ENCODE measurements at regions of chr2 and their contacts with region 1.

Region 1: GRCh38 chr2:218852911-218853667 is 6.5 kb upstream of the WNT6 start:
- DNase-seq: peak; percentile 51 to 85 (median 63)
- ATAC-seq: peak; percentile 92
- H3K4me3 ChIP-seq: no peak overlapping the region
- H3K4me3 Mint-ChIP-seq: no peak overlapping the region
- H3K27ac ChIP-seq: no peak overlapping the region
- H3K27ac Mint-ChIP-seq: no peak overlapping the region
- H3K4me1 ChIP-seq: peaks cover 7% of the 10 kb centered on the region
- H3K4me1 Mint-ChIP-seq: no peaks in the 10 kb centered on the region
- H3K27me3 ChIP-seq: peaks cover 45 to 64% of the 10 kb centered on the region in 2 experiments
- H3K27me3 Mint-ChIP-seq: peaks cover 70% of the 10 kb centered on the region
- CTCF ChIP-seq: peak; percentile 74

Region 2: GRCh38 chr2:218648088-218648786 is 204.9 kb before region 1 on chr2:
- CTCF ChIA-PET with region 1: no interaction called
- POLR2A ChIA-PET with region 1: no interaction called
- intact Hi-C with region 1: loop called in 1 of 2 experiments (anchors 5 kb)
- DNase-seq: peak; percentile 25 to 77 (median 42)
- ATAC-seq: peak; percentile 92
- H3K4me3 ChIP-seq: no peak overlapping the region
- H3K4me3 Mint-ChIP-seq: no peak overlapping the region
- H3K27ac ChIP-seq: no peak overlapping the region
- H3K27ac Mint-ChIP-seq: no peak overlapping the region
- H3K4me1 ChIP-seq: peaks cover 8% of the 10 kb centered on the region
- H3K4me1 Mint-ChIP-seq: peaks cover 6% of the 10 kb centered on the region
- H3K27me3 ChIP-seq: no peaks in the 10 kb centered on the region
- H3K27me3 Mint-ChIP-seq: no peaks in the 10 kb centered on the region
- CTCF ChIP-seq: peak; percentile 79

Region 3: GRCh38 chr2:218710687-218711549 is 142.2 kb before region 1 on chr2 and contains the start of gene TTLL4:
- CTCF ChIA-PET with region 1: interaction called, 25 read pairs
- POLR2A ChIA-PET with region 1: no interaction called
- intact Hi-C with region 1: loop called in 1 of 2 experiments (anchors 5 kb)
- DNase-seq: peak; percentile 97 to 99 (median 99)
- ATAC-seq: peak; percentile 98
- H3K4me3 ChIP-seq: peak within 1 kb of the TSS; percentile 96
- H3K4me3 Mint-ChIP-seq: peak within 1 kb of the TSS; percentile 99
- H3K27ac ChIP-seq: peak within 1 kb of the TSS; percentile 66 to 87
- H3K27ac Mint-ChIP-seq: peak within 1 kb of the TSS; percentile 91
- H3K4me1 ChIP-seq: peaks cover 22% of the 10 kb centered on the region
- H3K4me1 Mint-ChIP-seq: peaks cover 26% of the 10 kb centered on the region
- H3K27me3 ChIP-seq: peaks cover 0 to 6% of the 10 kb centered on the region in 2 experiments
- H3K27me3 Mint-ChIP-seq: peaks cover 10% of the 10 kb centered on the region
- CTCF ChIP-seq: peak; percentile 87
- total RNA-seq, gene TTLL4: 7.3 to 10.8 TPM

Region 4: GRCh38 chr2:218898109-218898878 is 45.2 kb after region 1 on chr2:
- CTCF ChIA-PET with region 1: interaction called, 38 read pairs
- POLR2A ChIA-PET with region 1: no interaction called
- intact Hi-C with region 1: loop called (anchors 1 kb)
- DNase-seq: peak; percentile 56 to 87 (median 76)
- ATAC-seq: peak; percentile 14
- H3K4me3 ChIP-seq: peak overlapping the region; percentile 61
- H3K4me3 Mint-ChIP-seq: peak overlapping the region; percentile 88
- H3K27ac ChIP-seq: peak overlapping the region in 1 of 2 donors; percentile 74
- H3K27ac Mint-ChIP-seq: peak overlapping the region; percentile 91
- H3K4me1 ChIP-seq: peaks cover 53% of the 10 kb centered on the region
- H3K4me1 Mint-ChIP-seq: peaks cover 45% of the 10 kb centered on the region
- H3K27me3 ChIP-seq: peaks cover 10 to 24% of the 10 kb centered on the region in 2 experiments
- H3K27me3 Mint-ChIP-seq: peaks cover 41% of the 10 kb centered on the region
- CTCF ChIP-seq: peak; percentile 99

Region 5: GRCh38 chr2:219029829-219030165 is 176.7 kb after region 1 on chr2:
- CTCF ChIA-PET with region 1: no interaction called
- POLR2A ChIA-PET with region 1: no interaction called
- intact Hi-C with region 1: loop called in 1 of 2 experiments (anchors 1 kb)
- DNase-seq: peak; percentile 57 to 87 (median 68)
- ATAC-seq: peak; percentile 95
- H3K4me3 ChIP-seq: no peak overlapping the region
- H3K4me3 Mint-ChIP-seq: no peak overlapping the region
- H3K27ac ChIP-seq: no peak overlapping the region
- H3K27ac Mint-ChIP-seq: no peak overlapping the region
- H3K4me1 ChIP-seq: no peaks in the 10 kb centered on the region
- H3K4me1 Mint-ChIP-seq: no peaks in the 10 kb centered on the region
- H3K27me3 ChIP-seq: peaks cover 3 to 19% of the 10 kb centered on the region in 2 experiments
- H3K27me3 Mint-ChIP-seq: peaks cover 42% of the 10 kb centered on the region
- CTCF ChIP-seq: peak; percentile 94

Region 6: GRCh38 chr2:219155054-219155644 is 302.1 kb after region 1 on chr2:
- CTCF ChIA-PET with region 1: no interaction called
- POLR2A ChIA-PET with region 1: no interaction called
- intact Hi-C with region 1: loop called in 1 of 2 experiments (anchors 5 kb)
- DNase-seq: peak in 5 of 14 experiments; percentile 18 to 84 (median 75)
- ATAC-seq: peak; percentile 21
- H3K4me3 ChIP-seq: no peak overlapping the region
- H3K4me3 Mint-ChIP-seq: no peak overlapping the region
- H3K27ac ChIP-seq: no peak overlapping the region
- H3K27ac Mint-ChIP-seq: no peak overlapping the region
- H3K4me1 ChIP-seq: peaks cover 7% of the 10 kb centered on the region
- H3K4me1 Mint-ChIP-seq: peaks cover 13% of the 10 kb centered on the region
- H3K27me3 ChIP-seq: no peaks in the 10 kb centered on the region
- H3K27me3 Mint-ChIP-seq: no peaks in the 10 kb centered on the region
- CTCF ChIP-seq: peak; percentile 78

Measured in CD4-positive, alpha-beta T cell (primary cell).